ENCODE measurements at regions of chr17 and their contacts with region 1.

Region 1: DNA sequence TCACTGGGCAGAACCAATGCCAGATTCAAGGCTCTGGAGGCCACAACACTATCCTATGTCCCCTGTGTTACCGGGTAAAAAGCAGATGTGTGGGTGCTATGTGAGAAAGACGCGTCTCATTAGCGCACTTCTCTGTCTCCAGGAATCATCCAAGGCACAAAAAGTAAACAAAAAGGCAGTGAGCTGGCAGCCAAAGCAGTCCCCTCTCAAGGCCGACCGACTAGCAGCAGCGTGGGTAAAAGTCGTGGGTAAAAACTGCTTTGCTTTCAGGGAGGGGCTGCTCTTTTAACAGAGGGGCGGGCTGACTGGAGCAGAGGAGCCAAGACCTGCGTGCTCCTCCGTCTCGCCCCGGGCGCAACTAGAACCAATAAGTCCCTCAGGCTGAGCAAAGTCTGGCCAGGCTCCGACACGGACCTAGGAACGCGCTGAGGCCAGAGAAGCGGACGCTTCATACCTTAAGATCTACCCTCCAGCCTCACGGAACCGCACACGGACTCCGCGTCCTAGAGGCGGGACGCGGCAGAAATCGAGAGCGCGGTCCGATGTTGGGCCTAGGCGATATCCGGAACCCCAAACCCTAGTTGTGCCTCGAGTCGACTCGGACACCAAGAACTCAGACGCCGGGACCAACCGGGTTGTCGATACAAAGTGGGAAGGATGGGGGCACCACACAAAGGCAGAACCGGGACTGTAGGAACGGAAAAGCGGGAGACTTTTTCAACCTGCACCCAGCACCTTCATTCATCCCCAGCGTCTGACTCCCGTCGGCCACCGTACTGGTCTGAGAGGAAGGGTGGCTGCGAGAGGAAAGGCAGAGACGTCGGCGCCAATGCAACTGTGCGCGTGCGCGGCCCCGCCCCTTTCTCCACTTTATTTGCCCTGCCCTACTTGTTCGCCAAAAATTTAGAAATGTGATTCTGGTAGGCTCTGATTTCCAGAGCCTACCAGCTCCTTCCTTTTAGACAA is at the start of gene INTS2:
- DNase-seq: peak; percentile 92
- H3K4me3 ChIP-seq: peak within 1 kb of the TSS; percentile 46 to 80 (median 76)
- H3K27ac ChIP-seq: peak within 1 kb of the TSS; percentile 59
- H3K4me1 ChIP-seq: peaks cover 11% of the 10 kb centered on the region
- H3K27me3 ChIP-seq: no peaks in the 10 kb centered on the region
- CTCF ChIP-seq: no peak
- POLR2A ChIP-seq: peak; percentile 98
- total RNA-seq, gene INTS2: 13.4 and 14.4 TPM in 2 replicates

Region 2: DNA sequence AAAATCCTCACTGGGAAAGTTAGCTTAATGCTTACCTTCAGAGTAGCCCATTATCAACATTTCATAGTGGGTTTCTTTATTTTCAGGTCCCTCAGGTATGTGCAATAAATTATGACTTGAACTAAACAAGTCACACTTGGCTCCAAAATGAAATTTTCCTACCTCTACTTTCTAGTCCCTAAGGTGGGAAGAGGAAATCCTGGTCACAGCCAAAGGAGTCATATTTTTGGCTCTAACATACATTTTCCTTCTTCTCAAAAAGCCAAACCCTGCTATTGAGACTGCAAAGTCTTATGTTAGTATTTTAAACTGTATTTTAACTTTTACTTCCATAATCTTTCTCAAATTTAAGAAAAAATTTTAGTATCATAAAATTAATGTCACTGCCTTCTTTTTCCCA is 193.0 kb before region 1 on chr17:
- CTCF ChIA-PET with region 1: no interaction called
- POLR2A ChIA-PET with region 1: no interaction called
- dilution Hi-C with region 1: no loop called
- intact Hi-C with region 1: no loop called
- DNase-seq: no peak
- H3K4me3 ChIP-seq: no peak overlapping the region
- H3K27ac ChIP-seq: no peak overlapping the region
- H3K4me1 ChIP-seq: no peaks in the 10 kb centered on the region
- H3K27me3 ChIP-seq: no peaks in the 10 kb centered on the region
- CTCF ChIP-seq: no peak
- POLR2A ChIP-seq: no peak

Region 3: DNA sequence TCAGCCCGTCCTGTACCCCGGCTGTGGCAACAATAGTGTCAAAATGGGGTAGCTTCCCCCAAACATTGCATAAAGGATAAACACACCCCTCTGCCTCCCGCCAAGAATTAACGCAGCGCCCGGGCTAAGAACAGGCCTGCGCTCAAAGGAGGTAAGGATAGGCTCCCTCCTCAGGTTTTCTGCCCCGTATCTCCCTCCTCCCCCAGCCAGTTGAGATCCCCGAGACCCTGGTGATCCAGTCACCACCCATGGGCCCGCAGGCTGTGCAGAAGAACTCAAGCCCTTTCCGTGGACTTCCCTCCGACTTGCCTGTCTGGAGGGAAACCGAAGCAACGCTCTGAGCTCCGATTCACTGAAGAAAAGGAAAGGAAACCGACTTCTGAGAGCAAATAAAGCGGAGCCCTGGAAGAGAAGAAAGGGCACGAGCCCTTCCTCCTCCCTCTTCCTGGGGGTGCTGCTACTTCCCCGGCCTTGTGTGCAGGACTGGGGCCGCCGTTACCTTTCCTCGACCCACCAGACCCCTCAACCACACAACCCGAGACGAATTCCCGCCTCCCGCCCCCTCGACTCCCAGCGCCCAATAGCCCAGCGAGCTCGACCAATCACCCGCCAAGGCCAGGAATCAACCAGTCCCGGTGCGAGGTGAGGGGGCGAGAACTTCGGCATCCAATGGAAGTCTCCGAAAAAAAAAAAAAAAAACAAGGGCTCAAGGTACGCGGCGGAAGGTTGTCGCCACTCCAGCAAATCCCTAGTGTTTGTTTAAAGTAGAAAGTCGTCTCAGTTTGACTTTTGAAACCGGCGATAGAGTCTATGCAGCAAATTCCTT is 64.3 kb before region 1 on chr17 and contains the start of gene BRIP1:
- CTCF ChIA-PET with region 1: no interaction called
- POLR2A ChIA-PET with region 1: no interaction called
- dilution Hi-C with region 1: no loop called
- intact Hi-C with region 1: loop called (anchors 2 kb)
- DNase-seq: peak; percentile 95
- H3K4me3 ChIP-seq: peak within 1 kb of the TSS; percentile 83 to 97 (median 92)
- H3K27ac ChIP-seq: peak within 1 kb of the TSS; percentile 88
- H3K4me1 ChIP-seq: peaks cover 23% of the 10 kb centered on the region
- H3K27me3 ChIP-seq: no peaks in the 10 kb centered on the region
- CTCF ChIP-seq: no peak
- POLR2A ChIP-seq: peak; percentile 65
- total RNA-seq, gene BRIP1: 12.1 and 12.2 TPM in 2 replicates

Region 4: DNA sequence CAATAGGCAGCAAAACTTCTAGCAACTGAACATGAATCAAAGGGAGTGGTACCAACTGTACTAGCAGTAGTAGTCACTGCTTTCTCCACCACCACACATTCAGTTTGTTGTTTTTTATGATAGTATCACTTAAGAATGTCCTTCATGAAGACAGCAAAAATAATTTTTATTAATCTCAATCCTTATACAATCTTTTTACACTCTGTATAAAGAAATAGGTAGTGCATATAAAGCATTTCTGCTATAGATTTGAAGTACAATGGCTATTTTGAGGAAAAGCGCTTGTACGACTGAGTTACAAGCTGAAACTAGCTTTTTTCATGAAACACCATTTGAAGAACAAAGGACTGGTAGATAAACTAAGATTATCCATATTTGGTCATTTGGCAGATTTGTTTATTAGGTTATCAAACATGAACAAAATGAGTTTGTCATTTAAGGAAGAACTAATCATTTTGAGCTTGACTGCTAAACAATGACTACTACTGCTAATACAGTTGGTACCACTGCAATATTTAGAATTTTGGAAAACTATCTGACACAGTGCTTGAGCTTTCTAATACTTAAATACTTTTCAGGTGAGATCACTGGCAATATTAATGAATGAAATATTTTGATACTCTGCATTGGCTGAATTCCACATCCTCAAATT is 90.3 kb after region 1 on chr17:
- CTCF ChIA-PET with region 1: no interaction called
- POLR2A ChIA-PET with region 1: no interaction called
- dilution Hi-C with region 1: no loop called
- intact Hi-C with region 1: no loop called
- DNase-seq: peak; percentile 42
- H3K4me3 ChIP-seq: no peak overlapping the region
- H3K27ac ChIP-seq: peak overlapping the region; percentile 55
- H3K4me1 ChIP-seq: peaks cover 6% of the 10 kb centered on the region
- H3K27me3 ChIP-seq: no peaks in the 10 kb centered on the region
- CTCF ChIP-seq: no peak
- POLR2A ChIP-seq: no peak

Region 5: GRCh38 chr17:62179534-62180151 is 252.2 kb after region 1 on chr17:
- CTCF ChIA-PET with region 1: no interaction called
- POLR2A ChIA-PET with region 1: no interaction called
- dilution Hi-C with region 1: no loop called
- intact Hi-C with region 1: loop called (anchors 10 kb)
- DNase-seq: peak; percentile 80
- H3K4me3 ChIP-seq: no peak overlapping the region
- H3K27ac ChIP-seq: no peak overlapping the region
- H3K4me1 ChIP-seq: peaks cover 17% of the 10 kb centered on the region
- H3K27me3 ChIP-seq: no peaks in the 10 kb centered on the region
- CTCF ChIP-seq: peak; percentile 7 to 19
- POLR2A ChIP-seq: no peak